Calu3 (cell line): ENCODE measurements at regions of chr12 and their contacts with region 1.

Region 1: DNA sequence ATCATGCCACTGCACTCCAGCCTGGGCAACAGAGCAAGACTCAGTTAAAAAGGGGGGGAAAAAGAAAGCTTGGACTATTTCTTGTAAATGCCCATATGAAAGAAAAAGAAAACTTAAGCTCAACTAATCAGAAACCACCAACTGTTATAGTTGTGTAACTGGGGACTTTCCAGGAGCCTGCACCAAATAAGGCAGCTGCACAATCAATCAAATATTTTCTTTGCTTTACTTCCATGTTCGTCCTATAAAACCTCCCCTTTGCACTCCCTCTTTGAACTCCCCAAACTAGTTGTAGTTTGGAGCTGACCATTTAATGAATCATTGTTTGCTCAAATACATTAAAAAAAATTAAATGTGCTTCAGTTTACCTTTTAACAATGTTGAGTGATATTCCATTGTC is 54.9 kb downstream of the OTOGL start:
- DNase-seq: peak; percentile 46
- H3K4me3 Mint-ChIP-seq: no peak overlapping the region
- H3K27ac Mint-ChIP-seq: peak overlapping the region; percentile 22
- H3K4me1 Mint-ChIP-seq: peaks cover 44% of the 10 kb centered on the region
- H3K27me3 Mint-ChIP-seq: no peaks in the 10 kb centered on the region
- CTCF ChIP-seq: no peak

Region 2: GRCh38 chr12:79935021-79935623 is 219.1 kb before region 1 on chr12 and contains the start of gene PPP1R12A:
- CTCF ChIA-PET with region 1: no interaction called
- intact Hi-C with region 1: loop called (anchors 10 kb)
- DNase-seq: peak; percentile 99
- H3K4me3 Mint-ChIP-seq: peak within 1 kb of the TSS; percentile 93
- H3K27ac Mint-ChIP-seq: peak within 1 kb of the TSS; percentile 94
- H3K4me1 Mint-ChIP-seq: peaks cover 15% of the 10 kb centered on the region
- H3K27me3 Mint-ChIP-seq: no peaks in the 10 kb centered on the region
- CTCF ChIP-seq: no peak
- total RNA-seq, gene PPP1R12A: 86.7 and 97.4 TPM in 2 replicates

Region 3: GRCh38 chr12:79945433-79945832 is 208.8 kb before region 1 on chr12:
- CTCF ChIA-PET with region 1: no interaction called
- intact Hi-C with region 1: no loop called
- DNase-seq: no peak
- H3K4me3 Mint-ChIP-seq: no peak overlapping the region
- H3K27ac Mint-ChIP-seq: no peak overlapping the region
- H3K4me1 Mint-ChIP-seq: peaks cover 9% of the 10 kb centered on the region
- H3K27me3 Mint-ChIP-seq: no peaks in the 10 kb centered on the region
- CTCF ChIP-seq: no peak

Region 4: DNA sequence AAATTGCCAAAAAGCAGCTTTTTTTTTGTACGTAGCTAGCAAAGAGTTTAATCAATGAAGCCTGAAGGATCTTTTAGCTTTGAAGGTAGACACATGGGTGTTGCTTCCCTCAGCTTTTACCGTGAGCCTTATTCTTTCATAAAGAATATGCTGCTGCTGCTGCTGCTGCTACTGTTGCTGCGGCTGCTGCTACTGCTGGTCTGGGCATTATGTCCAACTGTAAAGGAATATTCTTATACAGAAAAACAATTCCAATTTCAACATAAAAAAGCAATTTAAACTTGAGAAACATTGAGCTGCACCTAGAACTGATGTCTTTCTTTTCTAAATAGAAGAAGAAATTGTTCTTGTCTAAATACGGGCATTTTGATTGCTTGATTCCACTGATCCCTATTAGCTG is 180.5 kb before region 1 on chr12:
- CTCF ChIA-PET with region 1: no interaction called
- intact Hi-C with region 1: loop called (anchors 10 kb)
- DNase-seq: no peak
- H3K4me3 Mint-ChIP-seq: no peak overlapping the region
- H3K27ac Mint-ChIP-seq: no peak overlapping the region
- H3K4me1 Mint-ChIP-seq: peaks cover 27% of the 10 kb centered on the region
- H3K27me3 Mint-ChIP-seq: no peaks in the 10 kb centered on the region
- CTCF ChIP-seq: no peak

Region 5: DNA sequence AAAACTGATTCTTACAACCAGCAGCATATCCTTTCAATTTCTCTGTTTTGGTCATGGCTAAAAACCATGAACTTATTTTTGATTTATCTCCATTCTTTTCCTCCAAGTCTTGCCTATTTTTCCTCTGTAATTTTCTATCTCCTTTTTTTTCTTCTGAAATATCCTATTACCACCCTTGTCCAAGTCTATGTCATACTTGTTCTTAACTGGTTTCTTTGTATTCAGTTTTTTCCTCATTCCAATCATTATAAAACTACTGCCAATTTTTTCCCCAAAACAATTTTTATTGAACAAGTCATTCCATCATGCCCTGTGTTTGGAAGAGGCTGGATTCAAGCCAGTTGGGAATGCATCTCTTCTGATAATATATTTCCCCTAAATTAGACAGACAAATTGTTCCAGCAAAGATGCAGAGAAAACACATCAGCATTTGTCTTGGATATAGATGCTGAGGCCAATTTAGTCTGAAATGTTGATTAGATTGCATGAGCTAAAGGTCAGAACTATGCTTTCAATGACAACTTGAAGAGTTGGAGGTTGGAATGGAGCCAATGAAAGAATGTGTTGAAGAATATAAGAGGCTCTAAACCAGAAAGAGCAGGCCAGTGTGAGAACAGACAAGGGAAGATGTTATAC is 24.2 kb before region 1 on chr12:
- CTCF ChIA-PET with region 1: no interaction called
- intact Hi-C with region 1: loop called (anchors 1 kb)
- DNase-seq: peak; percentile 3
- H3K4me3 Mint-ChIP-seq: no peak overlapping the region
- H3K27ac Mint-ChIP-seq: peak overlapping the region; percentile 34
- H3K4me1 Mint-ChIP-seq: peaks cover 20% of the 10 kb centered on the region
- H3K27me3 Mint-ChIP-seq: no peaks in the 10 kb centered on the region
- CTCF ChIP-seq: no peak

Region 6: GRCh38 chr12:80200408-80200807 is 46.1 kb after region 1 on chr12:
- CTCF ChIA-PET with region 1: no interaction called
- intact Hi-C with region 1: no loop called
- DNase-seq: no peak
- H3K4me3 Mint-ChIP-seq: no peak overlapping the region
- H3K27ac Mint-ChIP-seq: no peak overlapping the region
- H3K4me1 Mint-ChIP-seq: no peaks in the 10 kb centered on the region
- H3K27me3 Mint-ChIP-seq: no peaks in the 10 kb centered on the region
- CTCF ChIP-seq: no peak